Endothelial cell of umbilical vein (primary cell): ENCODE measurements at regions of chr14 and their contacts with region 1.

Region 1: DNA sequence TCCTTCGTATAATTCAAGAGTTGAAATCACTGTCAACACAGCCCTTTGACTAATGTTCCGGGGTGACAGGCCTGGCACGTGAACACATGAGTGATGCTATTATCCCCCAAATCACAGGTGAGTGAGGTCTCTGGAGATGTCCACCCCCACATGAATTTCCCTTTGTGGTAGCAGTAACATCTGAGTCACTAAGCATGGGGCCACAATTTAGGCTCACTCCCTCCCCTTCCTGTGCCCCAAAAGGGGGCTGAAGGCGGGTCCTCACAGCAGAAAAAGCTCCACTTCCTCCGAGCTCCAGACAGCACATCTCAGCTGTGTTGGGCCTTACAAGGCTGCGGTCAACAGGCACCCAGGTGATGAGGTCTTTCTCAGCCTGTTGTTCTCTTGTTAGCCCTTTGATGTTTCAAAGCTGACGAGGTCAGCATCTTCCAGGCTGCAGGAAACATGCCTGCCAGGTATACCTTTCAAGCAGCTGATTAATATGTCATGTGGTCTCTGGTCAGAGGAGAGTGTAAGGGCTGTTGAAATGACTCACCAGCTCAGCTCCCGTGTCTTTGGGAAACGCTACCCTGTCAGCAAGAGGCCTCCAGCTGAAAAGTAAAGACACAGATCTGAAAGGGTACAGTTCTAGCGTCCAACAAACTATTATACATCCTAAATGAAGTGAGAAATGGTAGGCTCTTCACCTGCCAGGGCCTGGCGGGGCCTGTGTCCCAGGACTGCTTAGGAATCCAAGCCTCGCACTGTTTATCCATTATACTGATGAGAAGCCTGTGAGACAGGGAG is 107.3 kb downstream of the ZFP36L1 start:
- DNase-seq: no peak
- H3K4me3 ChIP-seq: no peak overlapping the region
- H3K27ac ChIP-seq: no peak overlapping the region
- H3K4me1 ChIP-seq: peaks cover 43% of the 10 kb centered on the region
- H3K27me3 ChIP-seq: no peaks in the 10 kb centered on the region
- CTCF ChIP-seq: no peak
- POLR2A ChIP-seq: no peak

Region 2: DNA sequence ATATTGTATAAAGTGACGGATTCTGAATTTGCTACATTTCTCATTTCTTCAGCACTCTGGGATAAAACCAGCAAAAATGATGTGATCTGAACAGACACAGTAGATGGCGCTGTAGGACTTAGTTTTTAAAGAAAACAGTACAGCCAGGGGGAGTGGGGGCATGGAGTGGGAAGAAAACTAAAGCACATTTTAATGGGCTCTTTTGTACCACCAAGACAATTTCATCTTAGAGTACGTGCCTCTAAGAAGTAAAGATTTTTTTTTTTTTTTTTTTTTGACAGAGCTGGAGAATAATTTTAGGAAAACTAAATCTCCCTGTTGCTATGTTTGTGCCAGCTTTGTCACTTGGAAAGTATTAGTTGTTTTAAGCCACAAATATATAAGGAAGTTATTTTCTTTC is 741.7 kb before region 1 on chr14:
- CTCF ChIA-PET with region 1: interaction called, 6 read pairs
- POLR2A ChIA-PET with region 1: no interaction called
- dilution Hi-C with region 1: no loop called
- intact Hi-C with region 1: loop called (anchors 10 kb)
- DNase-seq: peak; percentile 85
- H3K4me3 ChIP-seq: no peak overlapping the region
- H3K27ac ChIP-seq: no peak overlapping the region
- H3K4me1 ChIP-seq: peaks cover 6% of the 10 kb centered on the region
- H3K27me3 ChIP-seq: no peaks in the 10 kb centered on the region
- CTCF ChIP-seq: peak; percentile 37 to 61
- POLR2A ChIP-seq: no peak

Region 3: DNA sequence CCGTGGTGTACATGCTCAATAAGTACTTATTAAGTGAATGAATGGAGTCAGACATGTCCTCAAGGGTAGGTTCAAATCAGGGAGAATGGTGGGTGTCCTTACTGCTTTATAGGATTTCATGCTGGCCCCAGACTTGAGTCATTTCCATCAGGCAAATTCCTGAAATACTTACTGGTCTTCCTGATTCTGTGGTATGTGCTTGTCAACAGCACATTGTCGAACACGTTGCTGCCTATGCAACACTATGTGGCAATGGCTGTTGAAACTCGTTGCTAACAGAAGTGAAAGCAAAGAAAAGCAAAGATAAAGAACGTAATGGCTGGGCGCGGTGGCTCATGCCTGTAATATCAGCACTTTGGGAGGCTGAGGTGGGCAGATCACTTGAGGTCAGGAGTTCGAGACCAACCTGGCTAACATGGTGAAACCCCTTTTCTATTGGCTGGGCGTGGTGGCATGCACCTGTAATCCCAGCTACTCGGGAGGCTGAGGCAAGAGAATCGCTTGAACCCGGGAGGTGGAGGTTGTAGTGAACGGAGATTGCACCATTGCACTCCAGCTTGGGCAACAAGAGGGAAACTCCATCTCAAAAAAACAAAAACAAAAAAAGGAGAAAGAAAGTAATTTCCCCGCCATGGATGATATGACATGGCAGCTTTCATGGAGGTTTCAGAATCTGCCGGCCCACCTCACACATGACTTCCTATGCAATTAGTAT is 107.6 kb before region 1 on chr14:
- CTCF ChIA-PET with region 1: no interaction called
- POLR2A ChIA-PET with region 1: no interaction called
- dilution Hi-C with region 1: no loop called
- intact Hi-C with region 1: loop called (anchors 1 kb)
- DNase-seq: peak; percentile 94
- H3K4me3 ChIP-seq: no peak overlapping the region
- H3K27ac ChIP-seq: peak overlapping the region; percentile 77
- H3K4me1 ChIP-seq: peaks cover 40% of the 10 kb centered on the region
- H3K27me3 ChIP-seq: no peaks in the 10 kb centered on the region
- CTCF ChIP-seq: no peak
- POLR2A ChIP-seq: peak; percentile 77

Region 4: DNA sequence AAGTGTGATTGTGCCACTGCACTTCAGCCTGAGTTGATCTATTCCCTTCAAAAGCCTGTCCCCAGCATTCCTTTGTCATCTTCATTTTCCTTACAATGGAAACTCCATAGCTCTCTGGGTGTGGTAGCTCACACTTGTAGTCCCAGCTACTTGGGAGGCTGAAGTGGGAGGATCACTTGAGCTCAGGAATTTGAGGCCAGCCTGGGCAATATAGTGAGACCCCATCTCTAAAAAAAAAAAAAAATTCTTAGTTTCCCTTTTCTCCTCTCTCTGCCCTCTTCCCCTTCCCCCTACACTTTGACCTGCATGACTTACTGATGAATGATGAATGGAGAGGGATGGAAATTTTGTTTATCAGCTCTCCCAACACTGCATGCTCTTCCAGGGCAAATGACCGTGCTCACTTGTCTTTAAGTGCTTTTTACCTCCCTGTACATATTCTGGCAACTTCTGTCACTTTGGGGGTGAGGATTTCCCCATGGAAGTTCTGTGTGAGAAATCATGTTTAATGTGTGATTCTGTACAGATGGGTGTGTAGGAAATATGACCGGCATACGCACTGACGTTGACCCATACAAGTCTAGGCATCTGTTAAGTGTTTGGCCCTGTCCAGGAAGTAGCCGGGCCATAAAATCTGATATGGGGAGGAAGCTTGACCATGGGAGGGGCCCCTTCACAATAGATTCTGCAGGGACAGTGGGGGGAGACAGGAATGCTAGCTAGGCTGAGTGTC is 41.9 kb after region 1 on chr14:
- CTCF ChIA-PET with region 1: interaction called, 5 read pairs
- POLR2A ChIA-PET with region 1: interaction called, 3 read pairs
- dilution Hi-C with region 1: no loop called
- intact Hi-C with region 1: loop called (anchors 2 kb)
- DNase-seq: peak; percentile 62
- H3K4me3 ChIP-seq: no peak overlapping the region
- H3K27ac ChIP-seq: no peak overlapping the region
- H3K4me1 ChIP-seq: peaks cover 17% of the 10 kb centered on the region
- H3K27me3 ChIP-seq: no peaks in the 10 kb centered on the region
- CTCF ChIP-seq: no peak
- POLR2A ChIP-seq: no peak

Region 5: GRCh38 chr14:68816262-68816942 is 130.8 kb after region 1 on chr14:
- CTCF ChIA-PET with region 1: interaction called, 6 read pairs
- POLR2A ChIA-PET with region 1: no interaction called
- dilution Hi-C with region 1: no loop called
- intact Hi-C with region 1: loop called (anchors 1 kb)
- DNase-seq: peak; percentile 89
- H3K4me3 ChIP-seq: peak overlapping the region in 1 of 3 experiments; percentile 24
- H3K27ac ChIP-seq: peak overlapping the region; percentile 71
- H3K4me1 ChIP-seq: peaks cover 21% of the 10 kb centered on the region
- H3K27me3 ChIP-seq: no peaks in the 10 kb centered on the region
- CTCF ChIP-seq: peak; percentile 95
- POLR2A ChIP-seq: peak; percentile 46